Activated CD4-positive, alpha-beta T cell treated with anti-CD3 and anti-CD28 coated beads for 36 hours (primary cell): ENCODE measurements at regions of chr18 and their contacts with region 1.

Region 1: DNA sequence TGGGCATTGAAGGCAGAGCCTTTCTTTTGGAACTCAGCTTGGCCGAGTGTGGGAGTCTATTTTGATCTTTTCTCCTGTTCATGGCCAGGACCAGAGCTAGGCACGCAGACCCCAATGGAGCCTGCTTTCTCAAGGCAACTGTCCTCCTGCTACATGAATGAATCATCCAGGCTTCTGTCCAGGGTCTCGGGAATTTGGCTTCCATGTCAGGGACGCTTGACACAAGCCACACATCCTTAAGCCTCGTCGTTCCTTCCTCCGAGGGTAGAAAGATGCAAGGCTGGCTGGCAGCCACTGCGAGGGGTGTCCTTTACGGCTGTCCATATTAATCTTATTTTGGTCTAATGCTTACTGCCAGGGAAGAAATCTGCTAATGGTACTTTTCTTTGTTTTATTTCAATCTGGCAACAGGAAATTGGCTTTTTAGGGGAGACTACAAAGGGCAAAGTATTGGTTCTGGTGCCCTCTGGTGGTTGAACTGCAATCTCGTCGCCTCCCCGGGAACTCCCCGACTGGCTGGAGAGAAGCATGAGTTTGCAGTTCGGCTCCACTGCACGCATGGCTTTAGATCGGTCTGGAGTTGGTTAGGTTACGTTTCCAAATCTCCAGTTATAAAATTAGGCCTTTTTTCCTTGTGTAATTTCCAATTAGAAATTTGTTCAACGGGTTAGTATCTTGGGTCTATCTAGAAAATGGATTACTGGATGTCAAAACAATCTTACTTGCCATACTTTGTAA is 135.2 kb downstream of the ALPK2 start:
- DNase-seq: peak; percentile 87
- ATAC-seq: peak; percentile 95
- H3K4me3 Mint-ChIP-seq: no peak overlapping the region
- H3K27ac Mint-ChIP-seq: no peak overlapping the region
- H3K4me1 Mint-ChIP-seq: peaks cover 9% of the 10 kb centered on the region
- H3K27me3 Mint-ChIP-seq: peaks cover 27% of the 10 kb centered on the region

Region 2: DNA sequence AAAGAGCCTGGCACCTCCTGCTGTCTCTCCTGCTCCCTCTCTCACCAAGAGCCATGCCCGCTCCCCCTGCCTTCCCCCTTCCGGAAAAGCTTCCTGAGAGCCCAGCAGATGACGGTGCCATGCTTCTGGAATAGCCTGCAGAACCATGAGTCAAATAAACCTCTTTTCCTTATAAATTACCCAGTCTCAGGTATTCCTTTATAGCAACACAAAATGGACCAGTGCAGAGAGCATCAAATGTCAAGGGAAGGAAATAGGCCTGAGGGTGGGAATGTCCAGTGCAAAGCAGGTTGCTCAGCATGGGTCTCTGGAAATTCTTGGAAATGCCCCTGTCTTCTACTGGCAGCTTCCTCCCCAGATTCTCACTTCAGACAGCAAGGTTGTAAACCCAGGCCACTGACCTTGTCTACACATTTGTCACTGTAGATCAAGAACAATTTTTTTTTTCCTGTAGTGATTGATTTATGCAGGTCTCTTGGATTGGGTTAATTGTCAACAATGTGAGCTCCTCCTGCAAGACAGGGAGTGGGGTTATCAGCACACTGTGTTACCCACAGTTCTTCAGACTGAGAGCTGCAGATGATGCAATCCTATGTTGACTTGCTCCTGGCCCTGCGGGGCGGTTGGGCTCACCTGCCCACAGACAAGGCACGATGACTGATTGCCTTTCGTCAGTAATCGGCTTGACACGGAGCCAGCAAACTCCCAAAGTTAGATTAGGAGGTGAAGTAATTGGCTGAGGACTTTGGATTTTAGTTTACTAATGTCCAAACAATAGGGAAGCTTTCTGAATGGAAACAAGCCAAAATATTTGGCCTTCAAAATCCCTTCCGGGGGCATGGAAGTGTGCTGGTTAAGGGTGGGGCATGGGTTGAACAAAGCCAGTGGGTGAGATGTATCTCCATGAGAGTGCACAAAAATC is 1352.2 kb before region 1 on chr18:
- CTCF ChIA-PET with region 1: no interaction called
- POLR2A ChIA-PET with region 1: no interaction called
- intact Hi-C with region 1: no loop called
- DNase-seq: no peak
- ATAC-seq: no peak
- H3K4me3 Mint-ChIP-seq: no peak overlapping the region
- H3K27ac Mint-ChIP-seq: no peak overlapping the region
- H3K4me1 Mint-ChIP-seq: no peaks in the 10 kb centered on the region
- H3K27me3 Mint-ChIP-seq: peaks cover 8% of the 10 kb centered on the region

Region 3: GRCh38 chr18:57881818-57882413 is 611.8 kb before region 1 on chr18:
- CTCF ChIA-PET with region 1: no interaction called
- POLR2A ChIA-PET with region 1: no interaction called
- intact Hi-C with region 1: loop called in 1 of 2 experiments (anchors 10 kb)
- DNase-seq: peak; percentile 74
- ATAC-seq: peak; percentile 90
- H3K4me3 Mint-ChIP-seq: no peak overlapping the region
- H3K27ac Mint-ChIP-seq: no peak overlapping the region
- H3K4me1 Mint-ChIP-seq: peaks cover 2% of the 10 kb centered on the region
- H3K27me3 Mint-ChIP-seq: peaks cover 13% of the 10 kb centered on the region

Region 4: GRCh38 chr18:58195278-58195765 is 298.4 kb before region 1 on chr18:
- CTCF ChIA-PET with region 1: interaction called, 3 read pairs
- POLR2A ChIA-PET with region 1: no interaction called
- intact Hi-C with region 1: loop called in 1 of 2 experiments (anchors 5 kb)
- DNase-seq: peak; percentile 42
- ATAC-seq: peak; percentile 83
- H3K4me3 Mint-ChIP-seq: peak overlapping the region; percentile 56
- H3K27ac Mint-ChIP-seq: no peak overlapping the region
- H3K4me1 Mint-ChIP-seq: peaks cover 14% of the 10 kb centered on the region
- H3K27me3 Mint-ChIP-seq: peaks cover 14% of the 10 kb centered on the region

Region 5: DNA sequence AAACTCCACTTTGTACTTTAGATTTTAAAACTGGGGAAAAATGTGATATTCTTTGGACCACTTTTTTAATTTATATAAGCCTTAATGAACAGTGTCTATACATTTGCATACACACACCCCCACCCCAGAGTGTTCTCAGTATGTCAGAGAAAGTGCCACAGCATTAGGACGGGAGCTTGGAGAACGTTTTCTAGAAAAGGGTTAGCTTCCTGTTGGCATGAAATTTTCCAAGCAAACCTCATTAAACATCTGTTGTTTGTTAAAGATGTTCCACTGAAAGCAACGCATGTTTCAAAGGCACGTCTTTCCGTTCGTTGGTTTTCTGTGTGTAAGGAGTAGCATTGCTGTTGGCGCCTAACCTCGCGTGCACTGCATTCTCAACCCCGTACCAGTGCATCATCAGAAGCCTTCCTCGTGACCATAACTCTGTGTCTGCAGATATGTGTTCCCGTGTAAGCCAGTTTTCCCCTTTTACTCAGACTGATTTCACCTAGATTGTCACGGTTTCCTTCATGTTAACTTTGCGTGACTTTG is 93.3 kb before region 1 on chr18:
- CTCF ChIA-PET with region 1: interaction called, 3 read pairs
- POLR2A ChIA-PET with region 1: no interaction called
- intact Hi-C with region 1: loop called (anchors 1 kb)
- DNase-seq: peak; percentile 60
- ATAC-seq: peak; percentile 83
- H3K4me3 Mint-ChIP-seq: no peak overlapping the region
- H3K27ac Mint-ChIP-seq: peak overlapping the region; percentile 62
- H3K4me1 Mint-ChIP-seq: peaks cover 17% of the 10 kb centered on the region
- H3K27me3 Mint-ChIP-seq: no peaks in the 10 kb centered on the region

Region 6: DNA sequence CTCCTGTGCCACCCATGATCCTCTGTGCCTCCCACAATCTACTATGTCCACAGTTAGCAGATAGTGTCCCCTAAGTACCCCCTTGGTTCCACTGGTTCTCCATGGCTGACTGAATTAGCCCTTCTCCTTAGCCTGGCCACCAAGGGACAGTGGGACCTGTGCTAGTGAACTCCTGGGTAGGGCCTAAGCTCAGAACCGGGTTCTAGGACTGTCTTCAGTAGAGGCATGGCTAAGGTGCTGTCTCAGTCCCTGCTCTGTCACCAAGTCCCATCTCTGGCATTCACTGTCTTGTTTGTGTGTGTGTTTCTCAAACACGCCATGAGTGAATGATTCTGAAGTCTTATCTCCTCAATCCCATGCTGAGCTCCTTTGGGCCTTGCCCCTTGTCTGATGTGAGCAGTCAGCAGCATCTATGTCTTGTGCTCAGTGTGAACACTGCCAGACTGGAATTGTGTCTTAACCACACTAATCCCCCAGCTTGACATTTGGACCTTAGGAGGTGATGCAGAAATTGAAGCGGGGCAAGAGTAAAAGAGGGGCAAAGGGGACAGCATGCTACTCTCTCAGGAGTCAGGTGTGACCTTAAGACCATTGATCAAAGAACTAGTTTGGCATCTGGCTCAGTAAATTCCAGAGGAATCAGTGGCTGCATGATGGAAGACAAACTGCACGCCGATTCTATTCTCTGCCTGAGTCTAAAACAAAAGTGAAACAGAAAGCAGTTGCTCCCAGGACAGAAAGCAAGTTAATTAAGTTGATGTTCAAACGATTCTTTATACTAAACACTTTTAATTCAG is 55.3 kb before region 1 on chr18:
- CTCF ChIA-PET with region 1: interaction called, 3 read pairs
- POLR2A ChIA-PET with region 1: no interaction called
- intact Hi-C with region 1: loop called in 1 of 2 experiments (anchors 2 kb)
- DNase-seq: no peak
- ATAC-seq: peak; percentile 66
- H3K4me3 Mint-ChIP-seq: peak overlapping the region; percentile 54
- H3K27ac Mint-ChIP-seq: peak overlapping the region; percentile 78
- H3K4me1 Mint-ChIP-seq: peaks cover 18% of the 10 kb centered on the region
- H3K27me3 Mint-ChIP-seq: no peaks in the 10 kb centered on the region

Region 7: DNA sequence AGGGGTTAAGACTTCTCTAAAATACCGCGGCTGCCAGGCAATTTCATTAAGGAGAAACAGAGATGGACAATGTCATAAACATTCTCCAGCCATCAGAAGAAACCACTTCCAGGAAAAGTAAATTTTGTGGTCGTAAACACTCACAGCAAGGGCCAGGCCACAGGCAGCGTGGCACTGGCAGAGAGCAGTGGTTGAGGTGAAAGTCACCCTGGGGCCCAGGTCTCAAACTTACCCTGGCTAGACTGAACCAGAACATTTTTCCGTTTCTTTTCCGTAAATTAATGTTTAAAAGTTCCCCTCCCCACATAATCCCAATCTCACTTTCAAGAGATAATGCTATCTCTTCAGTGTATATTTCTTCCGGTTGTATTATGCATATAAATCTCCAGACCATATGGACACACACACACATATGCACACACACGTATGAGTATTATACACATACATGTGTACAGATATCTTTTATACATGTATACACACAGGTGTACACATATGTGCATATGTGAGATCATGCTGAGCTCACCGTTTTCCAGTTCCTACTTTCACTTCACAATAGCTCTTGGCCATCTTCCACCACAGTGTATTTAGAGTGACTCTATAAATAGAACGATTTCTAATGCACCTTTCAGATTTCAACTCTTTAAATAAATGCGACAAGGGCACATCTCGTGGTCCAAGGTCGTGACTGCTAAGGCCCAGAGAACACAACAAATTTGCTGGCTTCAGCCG is 267.7 kb after region 1 on chr18:
- CTCF ChIA-PET with region 1: interaction called, 43 read pairs
- POLR2A ChIA-PET with region 1: no interaction called
- intact Hi-C with region 1: loop called (anchors 1 kb)
- DNase-seq: peak; percentile 27
- ATAC-seq: peak; percentile 53
- H3K4me3 Mint-ChIP-seq: no peak overlapping the region
- H3K27ac Mint-ChIP-seq: peak overlapping the region; percentile 2
- H3K4me1 Mint-ChIP-seq: peaks cover 13% of the 10 kb centered on the region
- H3K27me3 Mint-ChIP-seq: peaks cover 18% of the 10 kb centered on the region

Region 8: GRCh38 chr18:60391571-60392226 is 1898.0 kb after region 1 on chr18:
- CTCF ChIA-PET with region 1: no interaction called
- POLR2A ChIA-PET with region 1: no interaction called
- intact Hi-C with region 1: no loop called
- DNase-seq: no peak
- ATAC-seq: no peak
- H3K4me3 Mint-ChIP-seq: no peak overlapping the region
- H3K27ac Mint-ChIP-seq: no peak overlapping the region
- H3K4me1 Mint-ChIP-seq: no peaks in the 10 kb centered on the region
- H3K27me3 Mint-ChIP-seq: no peaks in the 10 kb centered on the region